CD8-positive, alpha-beta memory T cell (primary cell): ENCODE measurements at regions of chr1 and their contacts with region 1.

Region 1: DNA sequence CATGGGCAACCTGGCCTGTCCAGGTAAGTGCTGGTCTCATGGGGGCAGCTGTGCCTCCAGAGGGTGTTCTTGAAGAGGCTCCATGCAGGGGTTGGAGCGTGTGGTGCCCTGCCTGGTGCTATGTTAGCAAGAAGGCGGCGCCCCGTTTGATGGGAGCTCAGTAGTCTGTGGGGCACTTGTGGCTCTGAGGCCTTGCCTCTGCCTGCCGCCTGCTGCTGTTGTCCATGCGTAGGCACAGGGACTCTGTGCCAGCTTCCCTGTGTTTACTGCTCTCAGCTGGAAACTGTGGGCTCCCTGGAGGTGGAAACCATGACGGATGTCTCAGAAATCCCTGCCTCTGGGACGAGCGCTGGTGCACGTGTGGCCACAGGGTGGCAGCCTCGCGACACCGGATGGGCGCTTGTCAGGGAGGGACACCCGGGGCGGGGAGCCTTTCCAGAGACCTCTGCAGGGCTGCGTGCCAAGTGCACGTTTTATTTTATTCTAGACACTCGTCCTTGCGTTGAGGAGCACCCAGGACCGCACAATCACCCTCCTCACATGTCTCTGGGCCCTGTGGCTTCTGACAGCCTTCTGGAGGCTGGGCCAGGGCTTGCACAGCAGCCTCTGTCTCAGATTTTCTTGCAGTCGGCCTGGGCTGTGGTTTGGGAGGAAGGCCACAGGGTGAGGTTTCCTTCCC is 27.1 kb downstream of the SNAP47 start:
- DNase-seq: peak; percentile 80 to 95 (median 84)
- H3K4me3 ChIP-seq: peak overlapping the region; percentile 35
- H3K4me3 Mint-ChIP-seq: peak overlapping the region; percentile 59 to 88 (median 71)
- H3K27ac ChIP-seq: no peak overlapping the region
- H3K27ac Mint-ChIP-seq: peak overlapping the region; percentile 83 to 97 (median 88)
- H3K4me1 ChIP-seq: peaks cover 67% of the 10 kb centered on the region
- H3K4me1 Mint-ChIP-seq: peaks cover 66 to 85% (median 80%) of the 10 kb centered on the region in 3 donors
- H3K27me3 ChIP-seq: no peaks in the 10 kb centered on the region
- H3K27me3 Mint-ChIP-seq: no peaks in the 10 kb centered on the region

Region 2: GRCh38 chr1:227776331-227776771 is 14.0 kb after region 1 on chr1:
- CTCF ChIA-PET with region 1: interaction called, 51 read pairs
- POLR2A ChIA-PET with region 1: interaction called, 15 read pairs
- DNase-seq: no peak
- H3K4me3 ChIP-seq: no peak overlapping the region
- H3K4me3 Mint-ChIP-seq: peak overlapping the region in 4 of 7 donors; percentile 12 to 32 (median 14)
- H3K27ac ChIP-seq: no peak overlapping the region
- H3K27ac Mint-ChIP-seq: peak overlapping the region in 3 of 8 donors; percentile 22 to 63 (median 34)
- H3K4me1 ChIP-seq: peaks cover 29% of the 10 kb centered on the region
- H3K4me1 Mint-ChIP-seq: peaks cover 30 to 49% (median 30%) of the 10 kb centered on the region in 3 donors
- H3K27me3 ChIP-seq: no peaks in the 10 kb centered on the region
- H3K27me3 Mint-ChIP-seq: no peaks in the 10 kb centered on the region

Region 3: DNA sequence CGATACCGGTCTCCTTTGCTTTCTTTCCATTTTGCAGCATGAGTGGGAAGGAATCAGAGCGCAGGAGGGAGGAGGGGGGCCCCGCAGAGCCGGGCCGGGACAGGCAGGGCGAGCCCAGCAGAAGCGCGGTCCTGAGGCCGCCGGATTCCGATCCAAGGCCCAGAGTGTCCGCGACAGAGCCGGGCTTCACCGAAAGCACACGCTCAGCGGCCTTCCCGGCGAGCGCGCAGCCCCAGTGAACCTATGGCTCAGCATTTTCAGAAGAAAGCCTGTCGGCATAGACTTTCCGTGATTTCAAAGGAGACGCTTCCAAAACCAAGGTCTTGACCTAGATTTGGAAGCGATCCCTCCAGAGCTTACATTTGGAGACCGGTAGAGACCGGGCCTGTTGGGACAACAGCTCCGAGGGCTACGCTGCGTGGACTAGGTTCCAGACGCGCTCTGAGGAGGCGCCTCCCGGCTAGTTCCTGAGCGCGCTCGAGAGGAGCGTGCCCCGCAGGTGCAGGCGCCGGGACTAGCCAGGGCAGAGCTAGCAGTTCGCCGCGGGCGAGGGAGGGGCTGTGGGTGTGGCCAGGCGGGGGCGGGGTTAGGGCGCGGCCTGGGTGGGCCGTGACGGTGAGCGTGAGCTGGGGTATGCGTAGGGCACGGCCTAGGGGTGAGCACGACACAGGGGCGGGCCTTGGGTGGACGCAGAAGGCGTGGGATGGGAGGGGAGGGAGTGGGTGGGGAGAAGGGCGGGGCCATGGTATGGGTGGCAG is 25.3 kb after region 1 on chr1:
- CTCF ChIA-PET with region 1: interaction called, 47 read pairs
- POLR2A ChIA-PET with region 1: interaction called, 36 read pairs
- DNase-seq: peak; percentile 88 to 98 (median 93)
- H3K4me3 ChIP-seq: peak overlapping the region; percentile 73
- H3K4me3 Mint-ChIP-seq: peak overlapping the region; percentile 81 to 95 (median 86)
- H3K27ac ChIP-seq: peak overlapping the region; percentile 33
- H3K27ac Mint-ChIP-seq: peak overlapping the region; percentile 47 to 94 (median 78)
- H3K4me1 ChIP-seq: peaks cover 16% of the 10 kb centered on the region
- H3K4me1 Mint-ChIP-seq: peaks cover 5 to 29% (median 14%) of the 10 kb centered on the region in 3 donors
- H3K27me3 ChIP-seq: no peaks in the 10 kb centered on the region
- H3K27me3 Mint-ChIP-seq: no peaks in the 10 kb centered on the region

Region 4: GRCh38 chr1:227946624-227947385 is 184.4 kb after region 1 on chr1:
- CTCF ChIA-PET with region 1: interaction called, 80 read pairs
- POLR2A ChIA-PET with region 1: interaction called, 4 read pairs
- DNase-seq: peak; percentile 24 to 67 (median 42)
- H3K4me3 ChIP-seq: peak overlapping the region; percentile 47
- H3K4me3 Mint-ChIP-seq: peak overlapping the region; percentile 59 to 79 (median 70)
- H3K27ac ChIP-seq: no peak overlapping the region
- H3K27ac Mint-ChIP-seq: no peak overlapping the region
- H3K4me1 ChIP-seq: peaks cover 6% of the 10 kb centered on the region
- H3K4me1 Mint-ChIP-seq: peaks cover 6 to 16% (median 10%) of the 10 kb centered on the region in 3 donors
- H3K27me3 ChIP-seq: peaks cover 11% of the 10 kb centered on the region
- H3K27me3 Mint-ChIP-seq: peaks cover 10 to 26% of the 10 kb centered on the region in 2 donors